ENCODE measurements at regions of chr11 and their contacts with region 1.

Region 1: DNA sequence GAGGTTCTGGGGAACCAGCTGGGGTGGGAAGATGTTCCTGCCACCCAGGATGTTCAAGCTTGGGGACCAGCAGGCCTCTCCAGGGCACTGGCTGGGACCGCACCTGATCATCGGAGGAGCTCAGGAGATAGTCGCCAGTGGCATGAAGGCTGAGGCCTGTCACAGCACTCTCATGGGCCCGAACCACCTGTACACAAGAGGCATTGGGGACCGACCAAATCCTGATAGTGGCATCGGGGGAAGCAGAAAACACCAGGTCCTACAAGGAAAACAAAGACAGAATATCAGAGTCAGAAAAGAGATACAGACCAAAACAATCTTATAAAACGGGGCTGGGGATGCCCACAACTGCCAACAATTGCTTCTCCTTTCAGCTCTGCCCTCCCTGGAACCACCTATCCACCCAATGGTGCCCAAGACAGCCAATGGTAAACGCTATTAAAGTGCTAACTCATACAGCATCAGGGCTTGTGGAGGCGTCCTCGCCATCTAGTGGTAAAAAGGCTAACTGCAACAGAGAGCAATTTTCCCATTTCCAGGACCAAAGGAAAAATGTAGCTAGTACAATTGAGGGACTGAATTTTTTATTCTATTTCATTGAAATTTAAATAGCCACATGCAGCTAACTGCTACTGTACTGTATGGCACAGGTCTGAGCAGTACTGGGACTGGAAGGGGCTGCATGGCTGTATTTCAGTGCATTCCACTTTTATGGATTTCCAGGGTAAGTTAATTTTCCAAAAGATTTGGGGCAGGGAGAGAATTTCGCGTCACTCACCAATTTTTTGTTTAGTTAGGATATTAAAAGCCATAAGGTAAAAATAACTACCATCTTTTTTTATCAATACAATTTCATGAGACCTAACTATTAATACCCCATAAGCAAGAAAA is 7.1 kb downstream of the PRPF19 start:
- DNase-seq: peak; percentile 69
- H3K4me3 ChIP-seq: no peak overlapping the region; a peak in 1 of 4 replicates
- H3K27ac ChIP-seq: no peak overlapping the region
- H3K4me1 ChIP-seq: peaks cover 0 to 1% of the 10 kb centered on the region in 2 experiments; a peak in 1 of 4 replicates
- H3K27me3 ChIP-seq: no peaks in the 10 kb centered on the region
- CTCF ChIP-seq: peak; percentile 95
- EP300 ChIP-seq: no peak
- RAD21 ChIP-seq: peak; percentile 71

Region 2: GRCh38 chr11:60775420-60775961 is 123.8 kb before region 1 on chr11:
- CTCF ChIA-PET with region 1: interaction called, 23 read pairs
- POLR2A ChIA-PET with region 1: no interaction called
- DNase-seq: peak; percentile 85
- H3K4me3 ChIP-seq: peak overlapping the region in 1 of 2 experiments; percentile 45; a peak in 1 of 4 replicates
- H3K27ac ChIP-seq: no peak overlapping the region
- H3K4me1 ChIP-seq: peaks cover 3 to 6% of the 10 kb centered on the region in 2 experiments; a peak in 2 of 4 replicates
- H3K27me3 ChIP-seq: no peaks in the 10 kb centered on the region
- CTCF ChIP-seq: peak; percentile 94
- EP300 ChIP-seq: no peak
- RAD21 ChIP-seq: peak; percentile 83

Region 3: GRCh38 chr11:60880643-60881282 is 18.5 kb before region 1 on chr11:
- CTCF ChIA-PET with region 1: interaction called, 55 read pairs
- POLR2A ChIA-PET with region 1: no interaction called
- DNase-seq: no peak
- H3K4me3 ChIP-seq: no peak overlapping the region
- H3K27ac ChIP-seq: no peak overlapping the region
- H3K4me1 ChIP-seq: no peaks in the 10 kb centered on the region
- H3K27me3 ChIP-seq: no peaks in the 10 kb centered on the region
- CTCF ChIP-seq: no peak
- EP300 ChIP-seq: no peak
- RAD21 ChIP-seq: no peak

Region 4: DNA sequence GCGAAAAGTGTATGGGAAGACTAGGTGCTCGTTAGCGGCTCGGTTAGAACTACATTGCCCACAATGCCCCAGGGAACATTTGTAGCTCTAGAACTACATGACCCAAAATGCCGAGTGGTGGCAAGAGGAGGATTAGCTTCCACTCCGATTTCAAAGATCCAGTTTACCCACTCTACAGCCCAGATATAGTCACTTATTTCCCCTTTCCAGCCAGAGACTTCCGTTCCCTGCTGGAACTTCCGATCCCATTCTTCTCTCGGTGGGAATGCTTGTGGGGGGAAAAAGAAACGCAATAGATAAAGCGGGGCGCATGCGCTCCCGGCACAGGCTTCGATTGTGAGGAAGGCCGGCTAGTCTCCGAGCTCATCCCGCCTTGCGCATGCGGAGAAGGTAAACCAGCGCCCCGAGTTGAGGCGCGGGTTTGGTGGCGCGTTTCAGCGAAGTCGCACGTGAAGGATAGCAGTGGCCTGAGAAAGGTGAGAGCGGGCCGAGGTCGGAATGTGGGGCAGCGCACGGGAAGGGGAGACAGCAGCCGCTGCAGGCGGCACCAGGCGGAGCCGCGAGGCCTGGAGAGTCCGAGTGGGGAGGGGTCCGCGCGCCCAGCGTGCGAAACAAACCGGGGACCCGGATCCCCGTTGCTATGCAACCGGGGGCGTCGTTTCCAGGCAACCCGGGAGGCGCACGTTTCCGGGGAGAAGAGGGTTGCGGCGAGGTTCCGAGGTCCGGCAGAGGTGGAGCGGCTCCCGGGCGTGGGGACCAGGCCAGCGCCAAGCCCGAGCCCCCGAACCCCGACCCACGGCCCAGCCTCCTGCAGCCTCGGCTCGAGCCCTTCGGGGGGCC is 14.7 kb after region 1 on chr11 and contains the start of gene TMEM109:
- CTCF ChIA-PET with region 1: interaction called, 25 read pairs
- POLR2A ChIA-PET with region 1: no interaction called
- DNase-seq: peak; percentile 94
- H3K4me3 ChIP-seq: peak within 1 kb of the TSS; percentile 80 to 87
- H3K27ac ChIP-seq: peak within 1 kb of the TSS; percentile 93 to 100
- H3K4me1 ChIP-seq: peaks cover 12 to 20% of the 10 kb centered on the region in 2 experiments; a peak in 2 of 4 replicates
- H3K27me3 ChIP-seq: no peaks in the 10 kb centered on the region; the same call in 1 of the 2 replicates
- CTCF ChIP-seq: no peak
- EP300 ChIP-seq: no peak
- RAD21 ChIP-seq: no peak
- polyA plus RNA-seq, gene TMEM109: 38.0 and 52.7 TPM in 2 replicates

Region 5: DNA sequence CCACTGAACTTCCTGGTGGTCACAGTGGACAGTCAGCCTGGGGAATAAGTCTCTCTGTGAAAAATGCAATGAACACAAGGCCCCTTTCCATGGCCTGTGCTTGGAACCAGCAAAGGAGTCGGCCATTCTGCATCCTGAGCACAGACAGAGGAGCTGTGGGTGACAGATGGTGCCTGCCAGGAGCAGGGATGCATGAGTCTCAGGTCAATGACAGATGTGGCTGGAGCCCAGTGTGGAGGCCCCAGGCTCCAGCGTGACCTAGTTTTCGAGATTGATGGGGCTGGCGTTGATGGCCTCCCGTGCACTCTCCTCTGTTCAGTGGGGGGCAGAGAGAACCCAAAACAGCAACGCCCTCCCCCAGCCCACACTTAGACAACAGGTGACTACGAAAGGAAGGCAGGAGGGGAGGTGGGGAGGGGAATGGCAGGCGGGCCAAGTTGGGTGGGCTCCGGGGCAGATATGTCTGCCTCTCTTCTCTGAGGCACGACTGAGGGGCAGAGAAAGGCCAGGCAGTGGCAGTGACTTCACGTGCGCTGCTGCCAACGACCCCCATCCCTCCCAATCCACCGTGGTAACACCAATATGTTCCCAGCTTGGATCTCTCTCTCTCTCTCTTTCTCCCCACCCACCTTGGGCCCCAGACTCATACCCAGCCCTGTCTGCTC is 168.6 kb after region 1 on chr11:
- CTCF ChIA-PET with region 1: no interaction called
- POLR2A ChIA-PET with region 1: no interaction called
- DNase-seq: peak; percentile 53
- H3K4me3 ChIP-seq: no peak overlapping the region
- H3K27ac ChIP-seq: no peak overlapping the region
- H3K4me1 ChIP-seq: peaks cover 0 to 2% of the 10 kb centered on the region in 2 experiments; a peak in 1 of 4 replicates
- H3K27me3 ChIP-seq: no peaks in the 10 kb centered on the region
- CTCF ChIP-seq: no peak
- EP300 ChIP-seq: no peak; a peak in 1 of 4 replicates
- RAD21 ChIP-seq: no peak

Region 6: GRCh38 chr11:61129639-61130523 is 230.6 kb after region 1 on chr11:
- CTCF ChIA-PET with region 1: interaction called, 14 read pairs
- POLR2A ChIA-PET with region 1: no interaction called
- DNase-seq: peak; percentile 96
- H3K4me3 ChIP-seq: peak overlapping the region; percentile 21 to 30; a peak in 2 of 4 replicates
- H3K27ac ChIP-seq: peak overlapping the region; percentile 35 to 51; a peak in 3 of 4 replicates
- H3K4me1 ChIP-seq: peaks cover 0 to 38% of the 10 kb centered on the region in 2 experiments; a peak in 1 of 4 replicates
- H3K27me3 ChIP-seq: no peaks in the 10 kb centered on the region
- CTCF ChIP-seq: peak; percentile 99
- EP300 ChIP-seq: 0 out of 4 replicates have a peak, but pooled peaks of 1 of the 2 experiments have one; percentile 3
- RAD21 ChIP-seq: peak; percentile 95

Measured in SK-N-SH (cell line).